Transverse colon (tissue), 4 donors: ENCODE measurements at regions of chr1 and their contacts with region 1.

Region 1: GRCh38 chr1:84603941-84604830 is 29.9 kb upstream of the CTBS start:
- DNase-seq: no peak
- H3K4me3 ChIP-seq: peak overlapping the region in 2 of 4 donors; percentile 2 to 26
- H3K27ac ChIP-seq: peak overlapping the region; percentile 55 to 79 (median 70)
- H3K4me1 ChIP-seq: peaks cover 0 to 10% (median 2%) of the 10 kb centered on the region in 4 donors
- H3K27me3 ChIP-seq: no peaks in the 10 kb centered on the region
- CTCF ChIP-seq: peak; percentile 21 to 55 (median 45)
- EP300 ChIP-seq: no peak
- POLR2A ChIP-seq: no peak

Region 2: GRCh38 chr1:84282780-84283333 is 321.3 kb before region 1 on chr1:
- in situ Hi-C with region 1: no loop called
- intact Hi-C with region 1: no loop called
- DNase-seq: no peak
- H3K4me3 ChIP-seq: no peak overlapping the region
- H3K27ac ChIP-seq: no peak overlapping the region
- H3K4me1 ChIP-seq: peaks cover 0 to 3% (median 0%) of the 10 kb centered on the region in 4 donors
- H3K27me3 ChIP-seq: no peaks in the 10 kb centered on the region
- CTCF ChIP-seq: no peak
- EP300 ChIP-seq: no peak
- POLR2A ChIP-seq: no peak

Region 3: DNA sequence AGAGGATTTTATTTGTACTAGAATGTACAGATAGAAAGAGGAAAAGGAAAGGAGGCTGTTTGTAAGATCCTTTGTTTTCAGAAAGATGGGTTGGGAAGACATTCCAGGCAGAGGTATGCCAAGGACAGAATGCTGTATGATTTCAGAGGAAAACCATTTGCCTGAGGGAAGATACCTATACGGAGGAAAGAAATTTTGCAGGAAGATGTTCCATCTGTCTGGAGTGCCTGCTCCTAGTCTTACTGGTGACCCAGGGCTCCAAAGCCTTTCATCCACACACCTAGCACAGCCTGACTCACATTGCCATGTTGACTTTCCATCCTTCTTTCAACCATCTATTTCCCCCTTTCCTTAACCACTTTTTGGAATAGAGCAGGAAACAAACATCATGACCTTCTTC is 284.5 kb before region 1 on chr1:
- in situ Hi-C with region 1: no loop called
- intact Hi-C with region 1: no loop called
- DNase-seq: no peak
- H3K4me3 ChIP-seq: no peak overlapping the region
- H3K27ac ChIP-seq: no peak overlapping the region
- H3K4me1 ChIP-seq: no peaks in the 10 kb centered on the region
- H3K27me3 ChIP-seq: no peaks in the 10 kb centered on the region
- CTCF ChIP-seq: no peak
- EP300 ChIP-seq: no peak
- POLR2A ChIP-seq: no peak

Region 4: DNA sequence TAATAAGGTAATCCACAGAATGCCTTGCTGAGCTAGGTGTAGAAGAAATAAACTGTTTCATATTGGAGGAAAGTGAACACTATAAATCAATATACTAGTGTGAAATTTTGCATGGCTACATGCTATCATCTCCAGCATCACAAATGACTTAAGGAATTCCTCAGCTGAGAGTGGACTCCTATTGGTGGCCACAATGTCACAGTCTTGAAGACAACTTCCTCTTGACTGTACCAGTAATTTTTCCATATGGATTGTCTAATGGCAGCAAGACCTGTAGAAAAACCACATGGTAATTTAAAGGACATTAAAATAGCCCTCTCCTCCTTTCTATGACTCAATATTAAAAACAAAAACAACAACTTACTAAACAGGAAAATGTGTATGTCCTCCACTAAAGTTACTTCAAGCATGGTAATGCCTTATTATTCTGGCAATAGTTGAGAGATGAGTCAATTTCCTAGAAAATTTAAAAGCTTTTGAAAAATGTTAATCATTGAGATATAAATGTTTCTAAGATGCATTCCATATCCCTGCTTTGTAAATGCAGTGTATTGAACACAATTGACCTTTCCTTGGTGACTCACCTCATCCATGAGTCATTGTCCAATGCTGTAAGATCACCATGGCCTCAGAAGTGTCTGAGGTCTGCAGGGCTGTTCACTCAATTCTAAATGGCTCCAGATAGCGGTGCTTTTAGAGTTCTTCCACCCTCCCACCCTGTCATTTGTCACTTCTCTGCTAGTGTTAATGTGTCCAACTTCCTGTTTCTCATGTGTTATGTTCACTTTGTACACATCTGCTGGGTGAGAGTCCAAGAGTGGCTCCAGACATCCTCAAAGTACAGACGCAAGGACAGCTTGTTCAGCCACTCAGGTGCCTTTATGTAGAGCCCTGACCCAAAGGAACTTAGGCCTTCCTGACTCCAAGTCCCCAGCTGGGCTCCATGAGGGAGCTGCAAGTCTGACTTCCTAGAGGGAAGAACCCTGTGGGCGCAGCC is 238.7 kb before region 1 on chr1:
- in situ Hi-C with region 1: no loop called
- intact Hi-C with region 1: no loop called
- DNase-seq: peak; percentile 28
- H3K4me3 ChIP-seq: no peak overlapping the region
- H3K27ac ChIP-seq: peak overlapping the region in 3 of 4 donors; percentile 46 to 63 (median 62)
- H3K4me1 ChIP-seq: peaks cover 0 to 14% (median 10%) of the 10 kb centered on the region in 4 donors
- H3K27me3 ChIP-seq: no peaks in the 10 kb centered on the region
- CTCF ChIP-seq: no peak
- EP300 ChIP-seq: no peak
- POLR2A ChIP-seq: no peak

Region 5: GRCh38 chr1:84442256-84442655 is 161.9 kb before region 1 on chr1:
- in situ Hi-C with region 1: loop called in 1 of 4 experiments (anchors 25 kb)
- intact Hi-C with region 1: loop called (anchors 2 kb)
- DNase-seq: no peak
- H3K4me3 ChIP-seq: no peak overlapping the region
- H3K27ac ChIP-seq: no peak overlapping the region
- H3K4me1 ChIP-seq: peaks cover 0 to 12% (median 3%) of the 10 kb centered on the region in 4 donors
- H3K27me3 ChIP-seq: no peaks in the 10 kb centered on the region
- CTCF ChIP-seq: peak; percentile 26 to 59 (median 45)
- EP300 ChIP-seq: no peak
- POLR2A ChIP-seq: no peak

Region 6: GRCh38 chr1:84506002-84506728 is 98.0 kb before region 1 on chr1 and contains the starts of genes GNG5 and SPATA1:
- in situ Hi-C with region 1: no loop called
- intact Hi-C with region 1: loop called (anchors 10 kb)
- DNase-seq: peak; percentile 99
- H3K4me3 ChIP-seq: peak within 1 kb of the TSS; percentile 63 to 93 (median 74)
- H3K27ac ChIP-seq: peak within 1 kb of the TSS; percentile 96 to 99 (median 97)
- H3K4me1 ChIP-seq: peaks cover 15 to 45% (median 31%) of the 10 kb centered on the region in 4 donors
- H3K27me3 ChIP-seq: no peaks in the 10 kb centered on the region
- CTCF ChIP-seq: no peak
- EP300 ChIP-seq: no peak
- POLR2A ChIP-seq: peak; percentile 97
- total RNA-seq, gene GNG5: 19.1 to 172 (median 127) TPM
- total RNA-seq, gene SPATA1: 0.14 to 1.6 TPM in 2 of 4 donors, not detected in the others

Region 7: GRCh38 chr1:85148524-85149250 is 544.5 kb after region 1 on chr1:
- in situ Hi-C with region 1: no loop called
- intact Hi-C with region 1: no loop called
- DNase-seq: no peak
- H3K4me3 ChIP-seq: no peak overlapping the region
- H3K27ac ChIP-seq: no peak overlapping the region
- H3K4me1 ChIP-seq: peaks cover 0 to 9% (median 0%) of the 10 kb centered on the region in 4 donors
- H3K27me3 ChIP-seq: no peaks in the 10 kb centered on the region
- CTCF ChIP-seq: no peak
- EP300 ChIP-seq: no peak
- POLR2A ChIP-seq: no peak